ENCODE measurements at regions of chr6 and their contacts with region 1.

Region 1: GRCh38 chr6:155154158-155154830 is 109.5 kb upstream of the CLDN20 start:
- DNase-seq: peak; percentile 64
- H3K4me3 Mint-ChIP-seq: peak overlapping the region; percentile 1
- H3K27ac Mint-ChIP-seq: peak overlapping the region; percentile 93
- H3K4me1 Mint-ChIP-seq: peaks cover 73% of the 10 kb centered on the region
- H3K27me3 Mint-ChIP-seq: no peaks in the 10 kb centered on the region

Region 2: DNA sequence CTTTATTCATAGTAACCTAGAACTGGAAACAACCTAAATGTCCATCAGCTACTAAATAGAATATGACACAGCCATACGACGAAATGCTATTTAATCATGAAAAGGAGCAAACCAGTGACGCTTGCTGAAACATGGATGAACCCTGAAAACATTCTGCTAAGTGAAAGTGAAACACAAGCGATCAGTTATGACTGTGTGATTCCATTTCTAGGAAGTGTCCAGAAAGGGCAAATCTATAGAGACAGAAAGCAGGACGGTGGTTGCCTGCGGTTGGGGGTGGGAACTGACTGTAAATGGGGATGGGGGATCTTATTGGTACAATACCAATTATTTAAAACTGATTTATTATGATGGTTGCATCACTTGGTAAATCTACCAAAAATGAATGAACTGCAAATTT is 924.5 kb before region 1 on chr6:
- CTCF ChIA-PET with region 1: no interaction called
- POLR2A ChIA-PET with region 1: no interaction called
- intact Hi-C with region 1: loop called (anchors 10 kb)
- DNase-seq: peak; percentile 88
- H3K4me3 Mint-ChIP-seq: peak overlapping the region; percentile 71
- H3K27ac Mint-ChIP-seq: peak overlapping the region; percentile 89
- H3K4me1 Mint-ChIP-seq: peaks cover 80% of the 10 kb centered on the region
- H3K27me3 Mint-ChIP-seq: no peaks in the 10 kb centered on the region

Region 3: GRCh38 chr6:154928325-154928922 is 225.9 kb before region 1 on chr6:
- CTCF ChIA-PET with region 1: interaction called, 13 read pairs
- POLR2A ChIA-PET with region 1: no interaction called
- intact Hi-C with region 1: no loop called
- DNase-seq: peak; percentile 77
- H3K4me3 Mint-ChIP-seq: no peak overlapping the region
- H3K27ac Mint-ChIP-seq: no peak overlapping the region
- H3K4me1 Mint-ChIP-seq: peaks cover 9% of the 10 kb centered on the region
- H3K27me3 Mint-ChIP-seq: no peaks in the 10 kb centered on the region

Region 4: DNA sequence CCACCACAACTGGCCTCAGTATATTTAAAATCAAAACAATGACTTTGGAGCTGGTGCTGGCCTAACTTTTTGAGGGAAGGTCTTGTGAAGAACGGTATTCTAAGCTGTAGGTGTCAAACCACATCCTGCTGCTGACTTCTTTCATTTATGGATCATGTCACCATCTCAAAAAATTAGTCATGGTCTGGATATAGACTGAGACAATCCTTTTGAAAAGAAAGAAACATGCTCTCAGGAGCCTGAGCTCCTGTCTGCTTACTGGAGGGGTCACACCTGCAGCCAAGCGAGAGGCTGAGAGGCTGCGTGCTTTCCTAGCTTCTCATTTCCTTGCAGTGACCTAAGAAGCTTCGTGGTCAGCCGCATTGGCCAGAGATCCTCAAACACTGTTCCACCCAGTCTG is 104.0 kb before region 1 on chr6:
- CTCF ChIA-PET with region 1: interaction called, 4 read pairs
- POLR2A ChIA-PET with region 1: interaction called, 3 read pairs
- intact Hi-C with region 1: loop called (anchors 1 kb)
- DNase-seq: peak; percentile 62
- H3K4me3 Mint-ChIP-seq: peak overlapping the region; percentile 14
- H3K27ac Mint-ChIP-seq: peak overlapping the region; percentile 85
- H3K4me1 Mint-ChIP-seq: peaks cover 25% of the 10 kb centered on the region
- H3K27me3 Mint-ChIP-seq: no peaks in the 10 kb centered on the region

Region 5: GRCh38 chr6:155117266-155117665 is 37.0 kb before region 1 on chr6:
- CTCF ChIA-PET with region 1: no interaction called
- POLR2A ChIA-PET with region 1: no interaction called
- intact Hi-C with region 1: loop called (anchors 1 kb)
- DNase-seq: no peak
- H3K4me3 Mint-ChIP-seq: no peak overlapping the region
- H3K27ac Mint-ChIP-seq: peak overlapping the region; percentile 42
- H3K4me1 Mint-ChIP-seq: peaks cover 23% of the 10 kb centered on the region
- H3K27me3 Mint-ChIP-seq: peaks cover 2% of the 10 kb centered on the region

Region 6: GRCh38 chr6:155126727-155127439 is 27.4 kb before region 1 on chr6:
- CTCF ChIA-PET with region 1: no interaction called
- POLR2A ChIA-PET with region 1: interaction called, 7 read pairs
- intact Hi-C with region 1: loop called (anchors 1 kb)
- DNase-seq: peak; percentile 88
- H3K4me3 Mint-ChIP-seq: peak overlapping the region; percentile 1
- H3K27ac Mint-ChIP-seq: peak overlapping the region; percentile 77
- H3K4me1 Mint-ChIP-seq: peaks cover 38% of the 10 kb centered on the region
- H3K27me3 Mint-ChIP-seq: no peaks in the 10 kb centered on the region

Region 7: DNA sequence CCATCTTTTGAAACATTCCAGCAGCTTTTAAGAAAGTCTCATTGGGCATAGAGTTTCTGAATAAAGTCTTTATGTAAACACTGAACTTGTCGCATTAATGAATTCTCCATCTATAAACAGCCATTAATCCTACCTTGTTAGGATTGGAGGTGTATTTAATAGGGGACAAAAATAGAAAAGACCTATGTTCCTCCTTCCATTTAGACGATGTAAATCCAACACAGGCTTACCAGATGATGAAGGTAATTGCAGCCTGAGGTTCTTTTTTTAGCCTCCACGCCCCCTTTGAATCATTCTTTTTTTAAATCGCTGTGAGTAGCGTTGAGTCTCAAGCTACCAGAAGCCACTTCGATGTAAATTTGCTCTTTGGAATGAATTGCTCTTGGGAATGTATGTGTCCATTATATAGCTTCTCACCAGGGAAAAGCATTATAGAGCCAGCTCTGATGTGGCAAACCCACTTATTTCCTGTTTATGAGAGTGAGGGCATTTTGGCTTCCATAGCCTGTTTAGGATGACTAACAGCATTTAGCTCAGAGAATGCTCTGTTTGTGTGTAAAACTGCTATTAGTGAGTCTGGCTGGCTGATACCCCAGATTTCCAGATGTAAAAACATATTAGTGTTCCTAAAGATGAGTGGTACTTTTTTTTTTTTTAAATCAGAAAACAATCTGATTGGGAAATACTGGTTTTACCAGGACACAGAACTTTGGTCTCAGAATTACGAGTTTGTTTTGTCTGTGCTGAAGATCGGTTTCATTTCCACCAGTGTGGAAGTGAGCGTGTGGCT is 34.6 kb after region 1 on chr6:
- CTCF ChIA-PET with region 1: no interaction called
- POLR2A ChIA-PET with region 1: interaction called, 5 read pairs
- intact Hi-C with region 1: loop called (anchors 1 kb)
- DNase-seq: no peak
- H3K4me3 Mint-ChIP-seq: peak overlapping the region; percentile 37
- H3K27ac Mint-ChIP-seq: peak overlapping the region; percentile 57
- H3K4me1 Mint-ChIP-seq: peaks cover 41% of the 10 kb centered on the region
- H3K27me3 Mint-ChIP-seq: no peaks in the 10 kb centered on the region